OCI-LY7 (cell line): ENCODE measurements at regions of chr5 and their contacts with region 1.

Region 1: GRCh38 chr5:140287801-140288521 is 14.9 kb downstream of the PFDN1 start:
- DNase-seq: no peak
- H3K4me3 ChIP-seq: no peak overlapping the region
- H3K27ac ChIP-seq: no peak overlapping the region
- H3K4me1 ChIP-seq: peaks cover 55% of the 10 kb centered on the region
- CTCF ChIP-seq: no peak

Region 2: DNA sequence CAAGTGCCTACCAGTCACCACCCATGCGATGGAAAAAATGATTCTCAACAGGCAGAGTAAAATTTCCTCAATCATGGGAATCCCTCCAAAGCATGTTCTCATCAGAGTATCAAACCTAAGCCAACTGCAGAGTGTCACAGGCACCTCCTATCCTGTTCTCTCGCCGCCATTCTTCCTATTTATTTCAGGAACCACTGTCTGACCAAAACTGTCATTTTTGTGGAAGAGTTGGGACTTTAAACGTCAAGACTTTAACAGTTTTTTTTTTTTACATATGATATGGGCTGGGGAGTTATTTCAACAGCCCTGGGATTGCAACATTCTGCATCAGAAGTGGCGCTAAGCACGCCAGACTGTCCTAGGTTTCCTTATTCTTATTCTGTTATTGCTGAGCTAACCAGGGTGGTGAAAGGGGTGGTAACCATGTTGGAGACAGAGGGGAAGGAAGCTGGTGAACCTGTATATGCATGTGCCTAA is 14.5 kb before region 1 on chr5:
- CTCF ChIA-PET with region 1: no interaction called
- POLR2A ChIA-PET with region 1: interaction called, 81 read pairs
- intact Hi-C with region 1: no loop called
- DNase-seq: no peak
- H3K4me3 ChIP-seq: no peak overlapping the region
- H3K27ac ChIP-seq: peak overlapping the region; percentile 2
- H3K4me1 ChIP-seq: peaks cover 29% of the 10 kb centered on the region
- CTCF ChIP-seq: no peak